Motor neuron (in vitro differentiated cells): ENCODE measurements at regions of chr1 and their contacts with region 1.

Region 1: GRCh38 chr1:174982971-174983689 is 16.6 kb upstream of the CACYBP start:
- ATAC-seq: no peak
- H3K4me3 ChIP-seq: no peak overlapping the region
- H3K27ac ChIP-seq: no peak overlapping the region
- H3K4me1 ChIP-seq: no peaks in the 10 kb centered on the region

Region 2: DNA sequence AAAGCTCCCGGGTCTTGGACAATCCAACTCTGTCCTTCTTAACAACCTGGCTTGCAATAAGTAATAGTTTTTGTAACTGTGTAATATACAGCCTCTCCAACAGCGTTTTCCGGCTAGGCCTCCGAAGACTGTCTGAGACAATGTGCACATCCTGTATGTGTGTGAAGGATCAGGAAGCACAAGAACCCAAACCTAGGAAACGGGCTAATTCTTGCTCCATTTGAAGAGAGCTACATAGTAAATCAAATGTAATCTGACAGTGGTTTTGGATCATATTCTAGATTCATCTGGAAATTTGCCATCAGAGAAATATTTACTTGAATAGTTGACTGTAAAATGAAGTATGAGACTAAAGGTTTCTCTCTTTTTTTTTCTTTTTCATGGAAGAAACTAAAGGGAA is 534.2 kb before region 1 on chr1:
- in situ Hi-C with region 1: no loop called
- ATAC-seq: no peak
- H3K4me3 ChIP-seq: no peak overlapping the region
- H3K27ac ChIP-seq: no peak overlapping the region
- H3K4me1 ChIP-seq: no peaks in the 10 kb centered on the region

Region 3: GRCh38 chr1:174769961-174770549 is 213.1 kb before region 1 on chr1:
- in situ Hi-C with region 1: loop called in 8 of 9 experiments (anchors 10 to 25 kb)
- ATAC-seq: peak in 4 of 8 experiments; percentile 47 to 63 (median 50)
- H3K4me3 ChIP-seq: no peak overlapping the region
- H3K27ac ChIP-seq: no peak overlapping the region
- H3K4me1 ChIP-seq: no peaks in the 10 kb centered on the region

Region 4: GRCh38 chr1:174858301-174858700 is 124.8 kb before region 1 on chr1:
- in situ Hi-C with region 1: no loop called
- ATAC-seq: no peak
- H3K4me3 ChIP-seq: no peak overlapping the region
- H3K27ac ChIP-seq: no peak overlapping the region
- H3K4me1 ChIP-seq: no peaks in the 10 kb centered on the region

Region 5: DNA sequence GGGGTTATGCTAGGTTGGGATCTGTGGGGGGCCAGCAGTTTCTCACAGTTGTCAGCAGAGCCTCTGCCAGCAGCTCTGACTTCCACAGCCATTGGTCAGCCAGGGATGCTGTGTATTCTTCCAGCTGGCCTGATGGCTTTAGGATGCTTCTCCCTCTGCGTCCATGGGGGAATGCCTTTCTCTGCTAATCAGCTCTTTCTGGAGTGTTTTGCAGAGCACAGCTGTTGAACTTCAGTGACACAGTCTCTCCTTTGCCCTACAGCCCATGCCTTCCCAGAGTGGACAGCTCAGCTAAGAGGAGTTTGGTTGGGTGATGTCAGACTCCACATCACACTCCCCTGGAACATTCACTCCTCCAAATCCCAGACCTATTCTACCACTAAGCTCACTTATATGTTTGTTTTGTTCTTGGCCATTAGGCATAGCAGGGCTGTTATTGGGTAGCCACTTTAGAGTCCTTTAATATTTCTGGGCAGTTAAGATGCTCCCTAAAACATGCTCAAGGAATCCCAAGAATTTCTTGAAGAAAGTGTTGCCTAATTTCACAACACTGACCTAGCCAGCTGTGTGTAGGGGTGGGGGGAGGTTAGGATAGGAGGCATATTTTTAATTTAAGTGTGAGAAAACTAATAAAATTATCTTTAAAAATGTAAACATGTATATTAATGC is 284.7 kb after region 1 on chr1:
- in situ Hi-C with region 1: no loop called
- ATAC-seq: no peak
- H3K4me3 ChIP-seq: no peak overlapping the region
- H3K27ac ChIP-seq: no peak overlapping the region
- H3K4me1 ChIP-seq: no peaks in the 10 kb centered on the region